ENCODE measurements at regions of chr17 and their contacts with region 1.

Region 1: DNA sequence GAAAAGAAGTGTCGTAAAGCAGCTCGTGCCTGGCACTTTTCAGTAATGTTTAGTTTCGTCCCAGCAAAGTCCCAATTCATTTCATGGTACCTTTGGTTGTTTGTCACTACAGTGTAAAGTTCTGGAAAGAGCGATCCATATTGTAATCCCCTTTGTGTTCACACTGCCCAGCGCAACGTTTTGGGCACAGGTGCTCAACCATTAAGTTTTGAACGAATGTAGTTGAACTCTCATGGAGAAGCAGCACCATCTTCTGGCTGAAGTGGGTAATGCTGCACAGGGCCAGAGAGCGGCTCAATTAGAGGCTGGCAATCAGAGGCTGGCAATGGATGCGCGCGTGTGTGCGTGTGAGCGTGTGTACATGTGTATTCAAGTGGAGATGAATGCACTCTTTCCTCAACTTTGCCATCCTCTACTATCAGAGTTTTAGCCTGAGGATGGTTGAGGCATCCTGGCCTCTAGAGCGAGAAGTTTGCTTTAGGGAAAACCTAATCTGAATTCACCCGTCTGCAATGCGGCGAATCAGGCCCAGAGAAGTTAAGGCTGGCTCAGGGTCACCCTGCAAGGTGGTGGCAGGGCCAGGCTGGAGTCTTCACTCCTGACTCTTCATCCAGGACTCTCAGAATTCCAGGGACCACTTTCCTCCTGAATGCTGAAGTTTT is 29.9 kb downstream of the DYNLL2 start:
- DNase-seq: peak; percentile 75 to 95
- H3K4me3 ChIP-seq: no peak overlapping the region
- CTCF ChIP-seq: peak in 2 of 3 donors; percentile 81 to 87
- POLR2A ChIP-seq: no peak

Region 2: DNA sequence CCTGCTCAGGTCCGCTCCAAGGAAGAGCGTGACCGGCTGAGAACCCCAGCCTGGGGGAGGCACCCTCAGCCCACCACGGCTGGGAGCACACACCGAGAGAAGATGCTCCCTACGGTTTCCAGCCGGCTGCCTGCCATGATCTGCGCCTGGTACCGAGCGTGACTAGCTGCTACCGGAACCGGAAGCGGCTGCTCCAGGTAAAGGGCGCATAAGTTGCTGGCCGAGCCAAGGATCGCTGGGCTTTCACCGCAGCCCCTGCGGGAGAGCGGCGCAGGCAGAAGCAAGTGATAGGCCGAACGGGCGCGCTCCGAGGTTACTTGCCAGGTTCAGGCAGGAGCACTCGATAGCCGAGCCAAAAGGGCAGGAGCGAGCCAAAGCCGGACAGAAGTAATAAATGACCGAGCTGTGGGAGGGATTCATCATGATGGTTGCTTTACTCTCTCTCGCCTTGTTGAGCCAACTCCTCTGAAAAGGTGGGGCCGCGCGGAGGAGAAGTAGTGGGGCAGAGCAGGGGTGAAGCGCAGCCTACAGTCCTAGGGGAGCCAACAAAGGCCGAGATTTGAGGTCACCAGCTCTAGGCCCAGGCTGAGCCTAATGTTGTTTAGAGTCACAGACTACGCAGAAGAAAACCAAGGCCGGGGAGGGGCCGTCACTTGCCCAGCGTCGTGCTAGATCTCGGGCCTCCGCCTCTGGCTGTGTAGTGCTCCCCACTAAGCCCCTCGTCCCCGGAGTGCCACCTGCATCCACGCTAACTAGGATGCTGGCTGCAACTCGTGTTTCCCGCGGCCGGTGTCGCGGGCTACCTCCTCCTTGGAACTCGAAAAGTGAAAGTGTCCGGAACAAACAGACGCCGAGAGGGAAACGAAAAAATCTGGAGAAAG is 263.0 kb before region 1 on chr17 and contains the start of gene MRPS23:
- intact Hi-C with region 1: loop called (anchors 10 kb)
- DNase-seq: peak; percentile 97 to 99
- H3K4me3 ChIP-seq: peak within 1 kb of the TSS; percentile 75
- CTCF ChIP-seq: no peak
- POLR2A ChIP-seq: peak in 1 of 2 donors; percentile 18
- total RNA-seq, gene MRPS23: 12.2 to 17.8 (median 15.0) TPM

Measured in lower leg skin (tissue), 4 donors.